AG04449 (cell line): ENCODE measurements at regions of chr11 and their contacts with region 1.

Region 1: GRCh38 chr11:67265633-67266423 is 445 bp upstream of the GRK2 start:
- DNase-seq: no peak
- H3K4me3 ChIP-seq: peak overlapping the region; percentile 53
- CTCF ChIP-seq: peak; percentile 73

Region 2: DNA sequence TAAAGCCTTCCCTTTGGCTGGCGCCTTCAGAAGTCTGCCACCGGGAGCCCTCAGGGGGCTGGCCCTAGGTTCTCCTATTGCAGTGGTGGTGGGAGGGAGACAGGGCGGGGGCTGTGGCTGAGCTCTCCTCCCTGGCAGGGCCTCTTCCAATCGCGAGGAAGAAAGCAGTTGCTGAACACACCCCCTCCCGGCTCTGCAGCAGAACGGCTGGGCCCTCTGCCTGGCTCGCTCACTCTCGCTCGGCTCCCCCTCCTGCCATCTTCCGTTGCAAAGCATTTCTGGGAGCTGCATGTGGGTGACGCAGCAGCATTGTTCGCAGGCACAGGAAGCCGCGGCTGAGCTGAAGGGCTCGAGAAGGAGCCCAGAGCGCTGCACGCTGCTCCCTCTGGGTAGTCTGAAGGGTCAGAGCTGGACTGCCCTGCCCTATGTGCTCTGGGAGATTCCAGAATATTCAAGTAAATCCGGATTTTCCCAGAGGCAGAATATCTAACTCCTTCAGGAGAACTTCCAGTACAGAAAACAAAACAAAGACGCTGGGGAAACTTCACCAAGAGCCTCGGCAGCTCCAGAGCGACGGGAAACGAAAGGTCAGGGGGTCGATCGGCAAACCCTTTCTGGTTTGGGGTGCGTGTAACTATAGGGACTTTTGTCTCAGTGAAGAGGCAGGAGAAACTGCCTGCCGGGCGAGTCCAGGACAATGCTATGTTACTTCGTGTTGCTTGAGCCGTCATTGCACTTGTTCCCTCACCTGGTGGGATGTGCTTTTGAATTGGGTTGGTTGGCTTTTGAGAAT is 25.8 kb before region 1 on chr11:
- CTCF ChIA-PET with region 1: interaction called, 36 read pairs
- POLR2A ChIA-PET with region 1: interaction called, 4 read pairs
- DNase-seq: peak; percentile 92
- H3K4me3 ChIP-seq: peak overlapping the region; percentile 78
- CTCF ChIP-seq: peak; percentile 14

Region 3: GRCh38 chr11:67277231-67277961 is 11.6 kb after region 1 on chr11:
- CTCF ChIA-PET with region 1: interaction called, 48 read pairs
- POLR2A ChIA-PET with region 1: no interaction called
- DNase-seq: no peak
- H3K4me3 ChIP-seq: peak overlapping the region; percentile 52
- CTCF ChIP-seq: no peak

Region 4: DNA sequence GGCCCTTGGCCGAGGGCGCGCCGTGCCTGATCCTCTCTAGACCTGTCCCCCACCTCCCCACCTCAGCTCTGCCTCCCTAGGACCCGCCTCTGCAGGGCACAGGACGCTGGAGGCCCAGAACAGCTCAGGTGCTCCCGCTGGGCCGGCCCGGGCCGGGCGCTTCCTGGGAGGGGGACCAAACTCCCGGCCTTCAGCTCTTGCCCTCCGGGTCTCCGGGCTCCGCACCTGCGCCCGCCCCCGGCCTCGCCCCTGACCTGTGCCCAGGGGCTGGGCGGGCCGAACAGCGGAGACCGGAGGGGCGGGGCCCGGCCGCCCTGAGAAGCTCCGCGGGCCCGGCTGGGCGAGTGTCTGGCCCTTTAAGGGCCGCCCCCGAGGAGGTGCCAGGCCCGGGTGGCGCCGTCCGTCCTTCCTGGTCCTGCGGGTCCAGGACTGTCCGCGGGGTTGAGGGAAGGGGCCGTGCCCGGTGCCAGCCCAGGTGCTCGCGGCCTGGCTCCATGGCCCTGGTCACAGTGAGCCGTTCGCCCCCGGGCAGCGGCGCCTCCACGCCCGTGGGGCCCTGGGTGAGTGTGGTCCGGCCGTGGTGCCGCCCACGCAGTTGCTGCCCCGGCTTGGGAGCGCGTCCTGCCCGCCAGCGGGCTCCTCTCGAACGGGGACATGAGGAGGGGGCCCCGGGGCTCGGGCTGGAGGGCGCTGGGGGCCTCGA is 37.5 kb after region 1 on chr11 and contains the start of gene SSH3:
- CTCF ChIA-PET with region 1: interaction called, 10 read pairs
- POLR2A ChIA-PET with region 1: no interaction called
- DNase-seq: no peak
- H3K4me3 ChIP-seq: peak within 1 kb of the TSS; percentile 86
- CTCF ChIP-seq: no peak

Region 5: DNA sequence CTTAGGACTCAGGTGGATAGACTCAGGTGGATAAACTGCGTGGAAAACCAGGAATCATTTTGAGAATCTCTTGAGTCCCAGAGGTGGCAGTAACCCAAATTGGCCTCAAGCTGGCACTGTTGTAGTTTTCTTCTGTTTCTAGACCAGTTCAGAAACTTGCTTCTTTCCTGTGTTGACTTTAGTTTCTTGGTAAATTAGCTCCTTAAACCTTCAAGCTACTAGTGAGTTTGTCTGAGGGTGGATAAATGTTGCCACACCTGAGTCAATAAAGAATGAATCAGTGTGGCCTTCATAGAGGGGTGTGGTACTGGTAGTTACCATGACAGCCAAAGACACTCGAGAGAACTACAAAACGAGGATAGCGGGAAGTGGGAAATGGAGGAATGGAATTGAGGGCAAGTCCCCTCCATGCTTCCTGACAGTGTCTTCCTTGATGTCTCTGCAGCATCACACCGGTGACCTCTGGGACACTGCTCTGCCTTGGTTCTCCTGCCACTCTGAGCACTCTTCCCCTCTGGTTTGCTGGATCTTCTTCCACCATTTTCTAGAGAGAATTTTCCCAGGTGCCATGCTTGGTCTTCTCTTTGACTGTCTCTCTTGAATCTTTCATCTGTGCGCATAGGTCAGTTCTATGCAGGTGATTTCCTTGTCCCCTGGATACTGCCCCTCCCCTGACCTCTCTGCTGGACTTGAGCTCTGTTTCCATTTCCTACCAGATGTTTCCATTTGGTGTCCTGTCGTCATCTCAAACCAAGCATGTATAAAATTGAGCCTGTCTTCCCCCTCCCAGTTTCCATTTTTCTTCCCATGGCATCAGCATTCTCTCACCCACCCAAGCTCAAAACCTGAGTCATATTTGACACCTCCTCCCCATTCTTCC is 80.3 kb after region 1 on chr11:
- CTCF ChIA-PET with region 1: interaction called, 67 read pairs
- POLR2A ChIA-PET with region 1: no interaction called
- DNase-seq: no peak
- H3K4me3 ChIP-seq: no peak overlapping the region
- CTCF ChIP-seq: peak; percentile 70

Region 6: DNA sequence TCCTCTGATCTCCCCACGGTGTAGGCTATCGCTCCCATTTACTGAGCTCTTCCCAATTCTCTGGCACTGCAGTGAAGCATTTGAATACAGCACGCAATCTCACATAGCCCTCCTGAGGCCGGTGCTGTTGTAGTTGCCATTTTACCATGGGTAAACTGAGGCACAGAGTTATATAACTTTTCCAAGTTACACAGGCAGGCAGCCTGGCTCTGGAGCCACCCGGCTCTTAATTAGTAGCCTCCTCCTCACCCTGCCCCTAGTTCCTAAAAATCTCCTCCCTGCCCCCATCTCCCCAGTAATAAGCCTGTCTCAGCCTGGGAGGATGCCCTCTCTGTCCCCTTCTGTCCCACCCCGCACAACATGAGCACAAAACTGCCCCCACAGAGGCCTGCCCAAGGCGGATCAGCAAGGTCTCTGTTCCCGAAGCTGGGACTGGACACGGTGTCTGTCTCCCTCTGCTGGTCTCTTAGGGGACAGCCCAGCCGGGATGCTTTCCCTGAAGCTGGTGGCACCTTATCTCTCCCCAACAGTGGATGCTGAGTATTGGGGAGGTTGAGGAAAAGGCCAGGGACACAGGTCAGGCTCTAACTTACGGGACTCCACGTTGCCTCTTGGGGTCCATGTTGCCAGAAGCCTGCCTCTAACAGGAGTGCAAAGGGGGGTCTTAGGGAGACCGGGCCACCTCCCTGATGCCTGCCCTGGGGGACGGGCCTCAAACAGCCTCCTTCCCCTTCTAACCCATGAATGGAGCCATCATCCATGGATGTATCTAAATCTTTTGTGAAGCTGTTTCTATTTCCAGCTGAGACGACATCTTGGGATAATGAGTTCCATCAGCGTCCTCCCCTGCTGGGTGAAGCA is 116.7 kb after region 1 on chr11:
- CTCF ChIA-PET with region 1: interaction called, 167 read pairs
- POLR2A ChIA-PET with region 1: interaction called, 3 read pairs
- DNase-seq: no peak
- H3K4me3 ChIP-seq: no peak overlapping the region
- CTCF ChIP-seq: peak; percentile 94